Natural killer cell (primary cell): ENCODE measurements at regions of chr11 and their contacts with region 1.

Region 1: GRCh38 chr11:6812390-6813005 is 13.0 kb upstream of the OR6A2 start:
- DNase-seq: peak in 1 of 2 donors; percentile 70
- ATAC-seq: peak; percentile 84 to 95 (median 89)
- H3K4me3 ChIP-seq: no peak overlapping the region
- H3K4me3 Mint-ChIP-seq: no peak overlapping the region
- H3K27ac ChIP-seq: no peak overlapping the region
- H3K27ac Mint-ChIP-seq: no peak overlapping the region
- H3K4me1 ChIP-seq: no peaks in the 10 kb centered on the region
- H3K4me1 Mint-ChIP-seq: peaks cover 0 to 5% of the 10 kb centered on the region in 2 donors
- H3K27me3 ChIP-seq: peaks cover 2% of the 10 kb centered on the region
- H3K27me3 Mint-ChIP-seq: peaks cover 19 to 42% of the 10 kb centered on the region in 2 donors
- CTCF ChIP-seq: peak; percentile 88

Region 2: GRCh38 chr11:6926208-6927029 is 113.9 kb after region 1 on chr11 and contains the start of gene ZNF215:
- intact Hi-C with region 1: no loop called
- DNase-seq: peak; percentile 16 to 21
- ATAC-seq: peak; percentile 48 to 78 (median 56)
- H3K4me3 ChIP-seq: peak within 1 kb of the TSS; percentile 63
- H3K4me3 Mint-ChIP-seq: peak within 1 kb of the TSS; percentile 64
- H3K27ac ChIP-seq: no peak within 1 kb of the TSS
- H3K27ac Mint-ChIP-seq: peak within 1 kb of the TSS in 1 of 2 donors; percentile 32
- H3K4me1 ChIP-seq: peaks cover 9% of the 10 kb centered on the region
- H3K4me1 Mint-ChIP-seq: peaks cover 17 to 22% of the 10 kb centered on the region in 2 donors
- H3K27me3 ChIP-seq: peaks cover 5% of the 10 kb centered on the region
- H3K27me3 Mint-ChIP-seq: peaks cover 8 to 65% of the 10 kb centered on the region in 2 donors
- CTCF ChIP-seq: no peak
- total RNA-seq, gene ZNF215: 0.26 to 0.80 TPM in 2 of 3 donors, not detected in the other

Region 3: GRCh38 chr11:7688238-7688826 is 875.8 kb after region 1 on chr11:
- intact Hi-C with region 1: loop called (anchors 5 kb)
- DNase-seq: peak in 1 of 2 donors; percentile 59
- ATAC-seq: peak in 2 of 3 donors; percentile 44 to 54
- H3K4me3 ChIP-seq: no peak overlapping the region
- H3K4me3 Mint-ChIP-seq: no peak overlapping the region
- H3K27ac ChIP-seq: no peak overlapping the region
- H3K27ac Mint-ChIP-seq: no peak overlapping the region
- H3K4me1 ChIP-seq: no peaks in the 10 kb centered on the region
- H3K4me1 Mint-ChIP-seq: no peaks in the 10 kb centered on the region
- H3K27me3 ChIP-seq: peaks cover 3% of the 10 kb centered on the region
- H3K27me3 Mint-ChIP-seq: peaks cover 25 to 46% of the 10 kb centered on the region in 2 donors
- CTCF ChIP-seq: peak; percentile 74